Activated CD4-positive, alpha-beta memory T cell treated with anti-CD3 and anti-CD28 coated beads for 36 hours (primary cell): ENCODE measurements at regions of chr12 and their contacts with region 1.

Region 1: GRCh38 chr12:40117818-40118217 is 11.9 kb upstream of the SLC2A13 start:
- DNase-seq: no peak
- H3K4me3 Mint-ChIP-seq: no peak overlapping the region
- H3K27ac Mint-ChIP-seq: peak overlapping the region; percentile 6
- H3K4me1 Mint-ChIP-seq: peaks cover 9% of the 10 kb centered on the region
- H3K27me3 Mint-ChIP-seq: peaks cover 12% of the 10 kb centered on the region

Region 2: DNA sequence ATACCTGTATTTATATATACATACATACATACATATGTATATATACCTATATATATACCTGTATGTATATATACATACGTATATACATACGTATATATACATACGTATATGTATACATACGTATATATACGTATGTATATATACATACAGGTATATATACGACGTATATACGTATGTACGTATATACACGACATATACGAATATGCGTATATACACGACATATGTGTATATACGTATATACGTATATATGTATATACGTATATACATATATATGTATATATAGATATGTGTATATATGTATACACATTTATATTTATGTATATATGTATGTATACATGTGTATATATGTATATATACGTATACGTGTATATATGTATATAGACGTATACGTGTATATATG is 405.5 kb before region 1 on chr12:
- CTCF ChIA-PET with region 1: no interaction called
- POLR2A ChIA-PET with region 1: no interaction called
- intact Hi-C with region 1: no loop called
- DNase-seq: no peak
- H3K4me3 Mint-ChIP-seq: no peak overlapping the region
- H3K27ac Mint-ChIP-seq: no peak overlapping the region
- H3K4me1 Mint-ChIP-seq: no peaks in the 10 kb centered on the region
- H3K27me3 Mint-ChIP-seq: no peaks in the 10 kb centered on the region

Region 3: GRCh38 chr12:40137252-40137651 is 19.4 kb after region 1 on chr12:
- CTCF ChIA-PET with region 1: no interaction called
- POLR2A ChIA-PET with region 1: no interaction called
- intact Hi-C with region 1: loop called (anchors 1 kb)
- DNase-seq: no peak
- H3K4me3 Mint-ChIP-seq: no peak overlapping the region
- H3K27ac Mint-ChIP-seq: no peak overlapping the region
- H3K4me1 Mint-ChIP-seq: peaks cover 15% of the 10 kb centered on the region
- H3K27me3 Mint-ChIP-seq: peaks cover 4% of the 10 kb centered on the region

Region 4: GRCh38 chr12:40168868-40169267 is 51.0 kb after region 1 on chr12:
- CTCF ChIA-PET with region 1: interaction called, 3 read pairs
- POLR2A ChIA-PET with region 1: no interaction called
- intact Hi-C with region 1: loop called (anchors 2 kb)
- DNase-seq: no peak
- H3K4me3 Mint-ChIP-seq: no peak overlapping the region
- H3K27ac Mint-ChIP-seq: no peak overlapping the region
- H3K4me1 Mint-ChIP-seq: peaks cover 11% of the 10 kb centered on the region
- H3K27me3 Mint-ChIP-seq: peaks cover 12% of the 10 kb centered on the region

Region 5: GRCh38 chr12:40215977-40216376 is 98.2 kb after region 1 on chr12:
- CTCF ChIA-PET with region 1: no interaction called
- POLR2A ChIA-PET with region 1: no interaction called
- intact Hi-C with region 1: no loop called
- DNase-seq: no peak
- H3K4me3 Mint-ChIP-seq: no peak overlapping the region
- H3K27ac Mint-ChIP-seq: no peak overlapping the region
- H3K4me1 Mint-ChIP-seq: no peaks in the 10 kb centered on the region
- H3K27me3 Mint-ChIP-seq: no peaks in the 10 kb centered on the region

Region 6: DNA sequence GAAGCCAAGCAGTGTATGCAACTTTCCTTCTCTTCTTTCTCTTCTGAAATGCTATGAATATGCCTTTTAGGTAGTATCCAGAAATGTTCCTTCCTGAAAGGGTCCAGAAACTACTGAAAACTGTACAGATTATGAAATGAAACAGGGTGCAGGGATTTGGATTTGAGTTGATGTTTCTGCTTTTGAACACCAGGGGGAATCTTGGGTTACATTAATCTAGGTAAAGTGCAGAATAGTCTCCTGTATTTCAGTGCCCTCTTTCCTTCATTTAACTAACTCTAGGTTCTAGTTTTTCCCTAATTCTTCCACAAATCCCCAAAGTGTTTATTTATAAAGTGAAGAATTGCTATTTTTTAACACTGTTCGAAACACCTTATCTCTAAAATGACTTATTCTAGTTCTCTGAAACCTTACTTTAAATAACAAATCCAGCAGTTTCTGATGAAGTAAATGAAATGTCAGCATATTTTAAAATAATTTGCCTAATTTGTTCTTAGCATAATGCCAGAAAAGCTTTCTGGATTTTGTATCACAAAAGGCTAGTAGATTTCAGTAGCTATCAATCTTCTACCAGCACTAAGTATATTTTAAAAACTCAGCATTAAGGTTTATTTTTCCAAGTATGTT is 218.9 kb after region 1 on chr12:
- CTCF ChIA-PET with region 1: no interaction called
- POLR2A ChIA-PET with region 1: no interaction called
- intact Hi-C with region 1: no loop called
- DNase-seq: no peak
- H3K4me3 Mint-ChIP-seq: no peak overlapping the region
- H3K27ac Mint-ChIP-seq: no peak overlapping the region
- H3K4me1 Mint-ChIP-seq: no peaks in the 10 kb centered on the region
- H3K27me3 Mint-ChIP-seq: no peaks in the 10 kb centered on the region